Keratinocyte (primary cell): ENCODE measurements at regions of chr20 and their contacts with region 1.

Region 1: DNA sequence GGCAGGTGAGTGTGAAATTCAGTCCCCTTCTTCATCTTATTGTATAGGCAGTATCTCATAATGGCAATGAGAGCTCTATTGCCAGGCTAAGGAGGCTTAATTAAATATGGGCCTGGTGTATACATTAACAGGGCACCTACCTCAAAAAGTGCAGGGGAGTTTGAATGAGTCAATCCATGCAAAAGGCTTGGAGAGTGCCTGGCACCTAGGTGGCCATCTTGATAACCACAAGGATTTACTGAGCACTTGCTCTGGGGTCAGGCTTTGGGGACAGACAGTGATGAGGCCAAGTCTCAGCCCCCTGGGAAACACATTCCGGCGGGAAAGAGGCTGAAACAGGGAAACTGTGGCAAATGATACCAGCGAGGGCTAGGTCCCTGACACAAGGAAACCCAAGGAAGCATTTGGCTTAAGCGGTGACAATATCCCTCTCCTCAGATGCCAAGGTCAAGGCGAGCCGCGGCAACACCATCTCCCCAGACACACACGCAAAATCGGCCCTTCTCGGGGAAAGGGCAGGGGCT is 589 bp upstream of the DOK5 start:
- DNase-seq: no peak
- H3K4me3 ChIP-seq: no peak overlapping the region
- H3K27ac ChIP-seq: no peak overlapping the region
- H3K4me1 ChIP-seq: no peaks in the 10 kb centered on the region
- H3K27me3 ChIP-seq: peaks cover 27% of the 10 kb centered on the region
- CTCF ChIP-seq: no peak

Region 2: DNA sequence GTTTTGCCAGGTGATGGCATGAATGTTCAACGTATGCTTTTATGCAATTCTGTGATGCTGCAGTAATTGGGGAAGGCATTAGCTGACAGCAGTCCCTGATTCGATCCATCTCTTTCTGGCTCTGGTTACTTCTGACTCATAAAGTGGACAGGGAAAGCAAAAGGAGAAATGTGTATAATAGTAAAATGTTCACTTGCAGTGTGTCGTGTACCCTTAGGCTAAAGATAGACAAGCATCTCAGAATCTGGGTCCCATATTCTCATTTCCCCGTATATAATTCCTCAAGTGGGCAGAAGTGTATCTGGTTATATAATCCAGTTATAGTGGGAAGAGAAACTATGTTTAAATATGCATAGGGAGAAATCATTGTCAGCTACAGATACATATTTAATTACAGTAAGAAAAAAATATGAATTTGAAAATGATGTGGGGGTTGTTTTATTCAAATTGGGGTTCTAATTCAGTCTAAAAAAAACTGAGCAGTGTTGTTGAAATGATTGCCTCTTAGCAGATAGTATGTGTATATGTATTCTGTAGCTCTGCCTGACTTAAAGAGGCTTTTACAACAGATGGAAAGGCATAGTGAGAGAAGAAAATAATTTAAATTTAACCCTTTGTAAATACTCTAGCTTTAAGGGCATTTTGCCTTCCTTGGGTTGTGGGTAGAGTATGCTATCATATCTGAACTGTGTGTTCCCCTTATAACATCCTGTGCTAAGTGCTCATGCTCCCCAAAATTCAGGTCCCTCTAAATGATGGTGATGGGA is 41.2 kb after region 1 on chr20:
- dilution Hi-C with region 1: loop called (anchors 5 kb)
- DNase-seq: no peak
- H3K4me3 ChIP-seq: no peak overlapping the region
- H3K27ac ChIP-seq: no peak overlapping the region
- H3K4me1 ChIP-seq: no peaks in the 10 kb centered on the region
- H3K27me3 ChIP-seq: no peaks in the 10 kb centered on the region
- CTCF ChIP-seq: no peak